ENCODE measurements at regions of chr11 and their contacts with region 1.

Region 1: DNA sequence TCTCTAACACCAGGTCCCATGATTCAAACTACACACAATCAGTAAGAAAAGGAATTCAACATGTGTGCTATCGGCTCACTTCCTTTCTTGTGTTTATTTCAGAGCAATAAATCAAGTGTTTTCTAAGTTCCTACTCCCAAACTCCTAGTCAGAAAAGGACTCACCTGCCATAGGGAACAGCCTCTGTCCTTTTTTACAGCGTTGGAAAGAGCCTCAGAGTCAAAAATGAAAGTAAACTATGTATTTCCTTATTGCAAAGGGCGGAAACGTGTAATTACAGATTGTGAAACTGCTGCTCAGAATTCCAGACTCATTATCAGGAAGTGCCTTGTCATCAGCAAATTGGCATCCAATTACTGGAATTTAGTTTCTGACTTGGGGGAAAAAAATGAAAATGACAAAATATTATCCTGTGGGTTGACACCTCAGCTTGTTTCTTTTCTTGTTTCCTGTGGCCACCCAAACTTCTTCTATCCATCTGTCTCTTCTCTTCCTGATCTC is at the start of gene CASP4:
- DNase-seq: peak in 2 of 5 donors; percentile 14 to 21
- ATAC-seq: peak; percentile 86 to 95 (median 91)
- H3K4me3 ChIP-seq: peak within 1 kb of the TSS; percentile 23 to 81 (median 61)
- H3K27ac ChIP-seq: peak within 1 kb of the TSS; percentile 72 to 97 (median 86)
- H3K4me1 ChIP-seq: peaks cover 0 to 43% (median 14%) of the 10 kb centered on the region in 12 donors
- H3K27me3 ChIP-seq: no peaks in the 10 kb centered on the region
- CTCF ChIP-seq: no peak
- POLR2A ChIP-seq: peak in 1 of 2 donors; percentile 24
- total RNA-seq, gene CASP4: 7.6 to 74.5 (median 11.2) TPM

Region 2: DNA sequence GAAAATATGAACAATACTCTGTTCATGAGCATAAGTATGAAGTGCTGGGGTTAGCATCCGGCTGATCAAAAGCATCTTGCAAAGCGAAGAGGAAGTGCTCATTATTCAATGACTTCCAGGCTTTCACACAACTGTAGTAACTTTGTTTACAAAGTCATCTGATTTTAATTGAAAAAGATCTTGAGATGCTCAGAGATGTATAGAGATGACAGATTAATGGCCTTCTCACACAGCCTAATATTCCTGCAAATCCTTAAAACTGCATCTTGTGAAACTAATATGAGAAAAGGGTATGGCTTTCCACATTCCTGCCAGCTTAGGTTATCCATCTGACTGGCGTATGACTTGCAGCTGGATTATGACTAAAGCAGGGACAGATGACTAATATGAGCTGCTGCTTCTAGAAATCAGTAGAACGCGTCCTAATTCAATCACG is 195.6 kb before region 1 on chr11:
- intact Hi-C with region 1: no loop called
- DNase-seq: no peak
- ATAC-seq: peak; percentile 51 to 86 (median 60)
- H3K4me3 ChIP-seq: no peak overlapping the region
- H3K27ac ChIP-seq: peak overlapping the region in 5 of 12 donors; percentile 2 to 44 (median 15)
- H3K4me1 ChIP-seq: peaks cover 0 to 9% (median 2%) of the 10 kb centered on the region in 12 donors
- H3K27me3 ChIP-seq: no peaks in the 10 kb centered on the region
- CTCF ChIP-seq: no peak
- POLR2A ChIP-seq: no peak

Region 3: DNA sequence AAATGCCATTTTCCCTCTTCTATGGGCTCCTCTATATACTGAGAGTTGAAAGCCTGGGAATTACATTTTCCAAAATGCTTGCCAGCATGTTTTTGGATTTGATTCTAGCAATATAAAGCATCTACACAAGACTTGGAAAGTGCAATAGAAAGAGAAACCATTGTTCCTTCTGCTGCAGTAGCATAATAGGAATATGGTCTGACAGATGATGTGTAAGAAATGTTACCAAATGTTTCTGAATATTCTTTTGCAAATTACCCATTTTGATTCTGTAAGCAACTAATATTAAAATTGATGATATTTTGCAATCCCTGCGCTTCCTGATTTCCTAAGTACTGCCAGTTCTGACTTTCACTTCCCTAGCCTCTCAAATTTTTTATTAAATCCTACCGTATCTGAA is 131.7 kb before region 1 on chr11:
- intact Hi-C with region 1: no loop called
- DNase-seq: no peak
- ATAC-seq: no peak
- H3K4me3 ChIP-seq: no peak overlapping the region
- H3K27ac ChIP-seq: peak overlapping the region in 1 of 12 donors; percentile 48
- H3K4me1 ChIP-seq: peaks cover 0 to 4% (median 0%) of the 10 kb centered on the region in 12 donors
- H3K27me3 ChIP-seq: no peaks in the 10 kb centered on the region
- CTCF ChIP-seq: no peak
- POLR2A ChIP-seq: no peak

Region 4: DNA sequence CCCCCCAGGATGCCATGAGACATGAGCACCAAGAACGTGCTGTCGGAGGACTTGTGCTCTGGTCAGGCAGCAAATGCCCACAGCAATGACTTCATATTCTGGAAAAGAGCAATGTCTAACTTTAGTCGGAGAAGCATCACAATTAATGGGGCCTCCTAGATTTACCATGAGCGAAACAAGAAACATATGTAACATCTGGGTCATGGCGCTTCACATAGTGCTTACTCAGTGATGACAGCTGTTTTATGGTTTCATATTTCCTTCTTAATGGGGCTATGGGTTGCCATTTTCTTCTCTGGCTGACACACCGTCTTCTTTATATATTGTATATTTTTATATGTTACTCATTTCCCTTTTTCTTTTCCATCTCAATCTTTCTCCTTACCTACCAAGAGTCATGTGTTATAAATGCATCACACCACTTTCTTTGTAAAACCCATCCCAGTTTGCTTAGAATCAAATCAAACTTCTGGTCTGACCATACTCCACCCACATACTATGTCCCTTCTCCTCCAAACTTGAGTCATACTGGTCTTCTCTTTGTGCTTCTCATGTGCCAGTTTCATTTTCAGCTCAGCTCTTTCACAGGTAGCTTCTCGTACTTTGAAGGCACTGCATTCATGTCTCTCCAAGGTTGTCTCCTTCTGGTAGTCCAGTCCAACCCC is 60.8 kb before region 1 on chr11:
- intact Hi-C with region 1: no loop called
- DNase-seq: no peak
- ATAC-seq: no peak
- H3K4me3 ChIP-seq: no peak overlapping the region
- H3K27ac ChIP-seq: no peak overlapping the region
- H3K4me1 ChIP-seq: no peaks in the 10 kb centered on the region
- H3K27me3 ChIP-seq: no peaks in the 10 kb centered on the region
- CTCF ChIP-seq: no peak
- POLR2A ChIP-seq: no peak

Region 5: GRCh38 chr11:105034813-105035620 is 66.6 kb after region 1 on chr11 and contains the start of gene CASP1:
- intact Hi-C with region 1: loop called in 2 of 10 experiments (anchors 10 kb)
- DNase-seq: peak in 3 of 5 donors; percentile 36 to 54 (median 42)
- ATAC-seq: peak; percentile 64 to 90 (median 88)
- H3K4me3 ChIP-seq: peak within 1 kb of the TSS; percentile 12 to 66 (median 52)
- H3K27ac ChIP-seq: peak within 1 kb of the TSS; percentile 52 to 96 (median 68)
- H3K4me1 ChIP-seq: peaks cover 0 to 63% (median 3%) of the 10 kb centered on the region in 12 donors
- H3K27me3 ChIP-seq: no peaks in the 10 kb centered on the region
- CTCF ChIP-seq: no peak
- POLR2A ChIP-seq: peak in 1 of 2 donors; percentile 31
- total RNA-seq, gene CASP1: 2.8 to 68.4 (median 7.8) TPM

Region 6: DNA sequence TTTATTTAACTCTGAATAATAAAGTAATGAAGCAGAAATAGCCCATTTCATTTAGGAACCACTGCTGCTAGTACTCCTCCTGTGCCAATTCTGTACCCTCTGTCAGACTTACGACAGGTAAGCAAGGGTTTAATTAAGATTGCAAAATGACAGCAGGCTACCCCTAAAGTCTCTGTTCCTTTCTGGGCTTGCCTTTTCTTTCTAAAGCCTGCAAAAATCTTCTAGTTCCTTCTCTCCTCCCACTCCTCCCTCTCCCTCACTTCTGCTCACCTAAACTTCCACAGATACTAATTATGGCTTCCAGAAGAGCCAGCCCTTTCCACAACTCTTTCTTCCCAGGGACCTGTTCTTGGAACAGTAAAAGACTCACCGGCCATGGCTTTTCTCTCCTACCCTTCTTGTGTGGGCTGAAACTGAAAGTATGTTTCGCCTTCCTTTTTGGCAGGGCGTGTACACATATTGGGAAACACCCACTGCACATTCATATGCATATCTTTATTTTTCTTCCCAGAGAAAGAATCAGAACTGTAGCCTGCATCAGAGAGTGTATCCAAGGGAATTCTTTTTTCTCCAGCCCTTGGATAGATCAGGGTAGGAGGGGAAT is 76.6 kb after region 1 on chr11 and contains the start of gene CARD16:
- intact Hi-C with region 1: loop called in 1 of 10 experiments (anchors 5 kb)
- DNase-seq: peak in 3 of 5 donors; percentile 29 to 46 (median 39)
- ATAC-seq: peak; percentile 69 to 92 (median 82)
- H3K4me3 ChIP-seq: peak within 1 kb of the TSS in 11 of 12 donors; percentile 23 to 64 (median 51)
- H3K27ac ChIP-seq: peak within 1 kb of the TSS in 11 of 12 donors; percentile 34 to 86 (median 65)
- H3K4me1 ChIP-seq: peaks cover 0 to 52% (median 9%) of the 10 kb centered on the region in 12 donors
- H3K27me3 ChIP-seq: no peaks in the 10 kb centered on the region
- CTCF ChIP-seq: no peak
- POLR2A ChIP-seq: peak in 1 of 2 donors; percentile 23
- total RNA-seq, gene CARD16: 3.9 to 43.6 (median 7.7) TPM